ENCODE measurements at regions of chr1 and their contacts with region 1.

Region 1: GRCh38 chr1:185636848-185637247 is 97.3 kb upstream of the HMCN1 start:
- DNase-seq: peak; percentile 61
- H3K4me3 Mint-ChIP-seq: peak overlapping the region; percentile 27
- H3K27ac Mint-ChIP-seq: peak overlapping the region; percentile 89
- H3K4me1 Mint-ChIP-seq: peaks cover 17% of the 10 kb centered on the region
- H3K27me3 Mint-ChIP-seq: no peaks in the 10 kb centered on the region

Region 2: GRCh38 chr1:185338719-185339622 is 297.9 kb before region 1 on chr1:
- intact Hi-C with region 1: loop called (anchors 1 kb)
- DNase-seq: peak; percentile 63
- H3K4me3 Mint-ChIP-seq: peak overlapping the region; percentile 13
- H3K27ac Mint-ChIP-seq: peak overlapping the region; percentile 78
- H3K4me1 Mint-ChIP-seq: peaks cover 43% of the 10 kb centered on the region
- H3K27me3 Mint-ChIP-seq: no peaks in the 10 kb centered on the region

Region 3: GRCh38 chr1:185559684-185560331 is 77.0 kb before region 1 on chr1:
- intact Hi-C with region 1: loop called (anchors 1 kb)
- DNase-seq: peak; percentile 74
- H3K4me3 Mint-ChIP-seq: peak overlapping the region; percentile 52
- H3K27ac Mint-ChIP-seq: peak overlapping the region; percentile 66
- H3K4me1 Mint-ChIP-seq: peaks cover 52% of the 10 kb centered on the region
- H3K27me3 Mint-ChIP-seq: no peaks in the 10 kb centered on the region

Region 4: DNA sequence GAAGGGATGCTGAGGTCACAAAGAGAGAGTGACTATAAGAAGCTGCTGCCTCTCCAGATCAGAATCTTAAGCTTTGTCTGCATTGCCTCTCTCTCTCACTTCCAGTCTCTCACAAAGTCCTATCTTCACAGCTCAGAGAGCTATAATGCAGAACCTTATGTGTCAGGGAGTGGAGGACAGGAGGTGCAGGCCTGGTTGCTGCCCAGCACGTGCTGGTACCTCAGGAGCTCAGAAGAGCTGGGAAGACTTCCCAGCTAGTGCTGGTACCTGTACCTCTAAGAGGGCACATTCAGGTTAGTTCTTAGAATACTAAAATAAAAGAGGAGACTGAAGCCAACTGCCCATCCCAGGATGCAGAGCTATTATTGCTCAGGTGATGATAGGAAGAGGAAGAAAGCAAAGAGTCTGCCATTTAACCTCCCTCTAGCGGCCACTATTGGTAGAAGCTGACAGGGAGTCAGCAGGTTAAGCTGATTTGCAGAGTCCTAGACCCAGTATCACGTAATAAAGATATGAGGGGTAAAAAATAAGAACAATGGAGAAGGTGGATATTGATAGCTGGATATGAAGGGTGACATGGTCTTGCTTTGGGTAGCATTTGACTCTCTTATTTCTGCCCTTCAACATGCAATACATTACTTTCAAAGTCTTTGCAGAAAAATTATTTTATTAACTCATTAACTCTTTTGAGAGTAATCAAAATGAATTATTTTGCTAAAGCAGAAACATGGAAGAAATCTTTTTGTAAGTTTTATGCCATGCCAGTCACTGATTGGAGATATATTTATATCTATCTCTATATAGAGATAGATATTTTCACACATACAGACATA is 40.8 kb before region 1 on chr1:
- intact Hi-C with region 1: loop called (anchors 5 kb)
- DNase-seq: peak; percentile 26
- H3K4me3 Mint-ChIP-seq: no peak overlapping the region
- H3K27ac Mint-ChIP-seq: peak overlapping the region; percentile 42
- H3K4me1 Mint-ChIP-seq: peaks cover 26% of the 10 kb centered on the region
- H3K27me3 Mint-ChIP-seq: no peaks in the 10 kb centered on the region

Region 5: GRCh38 chr1:185663332-185663731 is 26.5 kb after region 1 on chr1:
- intact Hi-C with region 1: loop called (anchors 2 kb)
- DNase-seq: no peak
- H3K4me3 Mint-ChIP-seq: no peak overlapping the region
- H3K27ac Mint-ChIP-seq: no peak overlapping the region
- H3K4me1 Mint-ChIP-seq: peaks cover 20% of the 10 kb centered on the region
- H3K27me3 Mint-ChIP-seq: no peaks in the 10 kb centered on the region